ENCODE measurements at regions of chr16 and their contacts with region 1.

Region 1: GRCh38 chr16:30585400-30586189 is at the start of gene ZNF785:
- DNase-seq: peak; percentile 96 to 97
- ATAC-seq: peak; percentile 99 to 100 (median 100)
- H3K4me3 ChIP-seq: peak within 1 kb of the TSS; percentile 81
- H3K27ac ChIP-seq: peak within 1 kb of the TSS; percentile 87
- H3K4me1 ChIP-seq: peaks cover 11% of the 10 kb centered on the region
- H3K27me3 ChIP-seq: no peaks in the 10 kb centered on the region
- CTCF ChIP-seq: peak; percentile 10
- total RNA-seq, gene ZNF785: 3.4 to 5.4 (median 3.9) TPM

Region 2: DNA sequence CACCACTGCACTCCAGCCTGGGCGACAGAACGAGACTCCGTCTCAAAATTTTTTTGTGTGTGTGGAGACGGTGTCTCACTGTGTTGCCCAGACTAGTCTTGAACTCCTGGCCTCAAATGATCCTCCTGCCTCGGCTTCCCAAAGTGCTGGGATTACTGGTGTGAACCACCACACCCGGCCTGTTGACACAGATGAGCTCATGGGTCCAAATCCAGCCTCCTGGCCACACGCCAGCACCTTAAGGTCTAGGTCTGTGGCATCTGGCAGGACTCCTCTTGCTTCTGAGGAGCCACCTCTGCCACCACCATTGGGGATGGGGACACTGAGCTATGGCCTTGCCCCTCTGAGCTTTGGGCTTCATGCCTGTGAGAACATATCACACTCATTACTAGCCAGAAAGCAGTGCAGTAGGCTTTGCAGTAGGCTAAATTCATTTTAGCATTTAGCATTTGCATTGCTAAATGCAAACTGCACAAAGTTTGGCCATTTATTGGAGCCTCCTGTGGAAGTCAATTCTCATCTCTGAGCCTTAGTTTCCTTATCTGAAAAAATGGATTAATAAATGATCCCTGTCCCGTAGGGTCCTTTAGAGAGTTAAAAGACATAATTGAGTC is 717.1 kb before region 1 on chr16:
- intact Hi-C with region 1: no loop called
- DNase-seq: peak in 1 of 2 donors; percentile 23
- ATAC-seq: no peak
- H3K4me3 ChIP-seq: no peak overlapping the region
- H3K27ac ChIP-seq: no peak overlapping the region
- H3K4me1 ChIP-seq: no peaks in the 10 kb centered on the region
- H3K27me3 ChIP-seq: no peaks in the 10 kb centered on the region
- CTCF ChIP-seq: no peak

Region 3: DNA sequence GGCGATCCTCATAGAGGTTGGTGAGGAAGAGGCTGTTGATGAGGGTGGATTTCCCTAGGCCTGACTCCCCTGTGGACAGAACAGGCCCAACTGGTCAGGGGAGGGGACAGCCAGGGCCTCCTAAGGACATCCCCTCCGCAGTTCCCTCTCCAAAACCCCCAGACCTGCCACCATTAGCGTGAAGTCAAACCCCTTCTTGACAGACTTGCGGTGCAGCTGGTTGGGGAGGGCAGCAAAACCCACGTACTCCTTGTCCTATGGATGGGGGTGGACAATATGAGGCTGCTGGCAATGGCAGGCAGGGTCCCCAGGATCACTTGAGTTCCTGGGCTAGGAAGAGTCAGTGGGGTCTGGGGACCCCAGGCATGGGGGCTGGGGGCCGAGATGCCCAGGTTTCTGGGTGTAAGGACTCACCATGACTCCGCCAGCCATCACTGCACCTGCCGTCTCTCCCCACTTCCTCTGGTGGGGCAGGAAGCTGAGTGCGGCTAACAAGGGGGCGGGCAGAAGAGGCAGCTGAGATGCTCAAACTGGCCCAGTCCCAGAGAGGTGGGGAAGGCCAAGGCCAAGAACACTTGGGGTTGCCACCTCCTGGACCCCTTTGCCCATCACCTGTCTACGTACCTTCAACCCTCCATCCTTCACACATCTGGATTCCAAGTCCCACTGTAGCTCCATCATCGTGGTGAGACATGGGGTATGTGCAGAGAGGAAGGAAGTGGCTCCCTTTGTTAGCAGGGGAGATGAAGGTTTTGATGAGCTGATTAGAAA is 203.3 kb before region 1 on chr16 and contains the start of gene SEPTIN1:
- intact Hi-C with region 1: no loop called
- DNase-seq: no peak
- ATAC-seq: no peak
- H3K4me3 ChIP-seq: no peak within 1 kb of the TSS
- H3K27ac ChIP-seq: peak within 1 kb of the TSS; percentile 32
- H3K4me1 ChIP-seq: peaks cover 12% of the 10 kb centered on the region
- H3K27me3 ChIP-seq: no peaks in the 10 kb centered on the region
- CTCF ChIP-seq: no peak
- total RNA-seq, gene SEPTIN1: 0.34 to 1.8 (median 0.90) TPM

Region 4: DNA sequence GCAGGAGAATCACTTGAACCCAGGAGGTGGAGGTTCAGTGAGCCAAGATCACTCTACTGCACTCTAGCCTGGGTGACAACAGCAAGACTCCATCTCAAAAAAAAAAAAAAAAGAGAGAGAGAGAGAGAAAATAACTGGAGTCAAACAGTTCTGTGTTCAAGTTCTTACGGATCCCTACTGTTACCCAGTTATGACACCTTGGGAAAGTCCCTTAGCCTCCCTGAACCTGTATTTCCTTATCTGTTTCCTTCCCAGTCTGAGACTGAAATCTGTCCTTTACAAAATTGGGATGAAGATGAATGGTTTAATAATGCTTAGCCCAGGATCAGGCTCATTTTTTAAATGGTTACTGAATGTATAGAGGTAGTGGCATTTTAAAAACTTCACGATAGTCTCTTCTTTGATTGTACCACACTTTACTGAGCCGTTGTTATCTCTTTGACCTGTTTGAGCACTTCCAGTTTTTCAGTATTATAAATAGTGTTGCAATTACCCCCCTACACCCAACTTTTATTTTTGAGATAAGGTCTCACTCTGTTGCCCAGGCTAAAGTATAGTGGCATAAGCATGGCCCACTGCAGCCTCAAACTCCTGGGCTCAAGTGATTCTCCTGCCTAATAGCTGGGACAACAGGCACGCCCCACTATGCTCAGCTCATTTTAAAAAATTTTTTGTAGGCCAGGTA is 76.4 kb before region 1 on chr16:
- intact Hi-C with region 1: no loop called
- DNase-seq: no peak
- ATAC-seq: no peak
- H3K4me3 ChIP-seq: no peak overlapping the region
- H3K27ac ChIP-seq: no peak overlapping the region
- H3K4me1 ChIP-seq: no peaks in the 10 kb centered on the region
- H3K27me3 ChIP-seq: peaks cover 0 to 2% (median 0%) of the 10 kb centered on the region in 3 donors
- CTCF ChIP-seq: no peak

Region 5: GRCh38 chr16:30534368-30535105 is 51.1 kb before region 1 on chr16 and contains the start of gene ZNF747:
- intact Hi-C with region 1: loop called in 1 of 2 experiments (anchors 2 kb)
- DNase-seq: peak; percentile 95 to 97
- ATAC-seq: peak; percentile 91 to 94 (median 92)
- H3K4me3 ChIP-seq: peak within 1 kb of the TSS; percentile 94
- H3K27ac ChIP-seq: peak within 1 kb of the TSS; percentile 97
- H3K4me1 ChIP-seq: peaks cover 17% of the 10 kb centered on the region
- H3K27me3 ChIP-seq: no peaks in the 10 kb centered on the region
- CTCF ChIP-seq: peak; percentile 0
- total RNA-seq, gene ZNF747: 6.4 to 16.4 (median 8.9) TPM

Region 6: DNA sequence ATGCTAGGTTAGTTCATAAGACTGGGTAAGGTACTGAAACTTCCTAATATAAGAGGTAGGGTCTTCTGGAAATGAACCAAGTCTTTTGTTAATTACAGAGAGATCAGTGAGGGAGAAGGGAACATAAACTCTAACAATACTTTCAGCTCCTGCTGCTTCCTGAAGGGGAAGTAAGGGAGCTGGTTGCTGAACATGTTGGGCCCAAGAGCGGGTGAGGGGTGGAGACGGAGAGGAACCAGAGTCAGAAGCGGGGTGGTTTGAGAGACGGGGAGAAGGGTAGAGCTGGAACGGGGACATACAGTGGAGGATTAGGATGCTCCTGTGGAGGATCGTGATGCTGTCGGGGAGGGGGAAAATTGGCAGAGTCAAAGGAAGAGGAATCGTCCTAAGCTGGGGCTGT is 39.5 kb before region 1 on chr16:
- intact Hi-C with region 1: no loop called
- DNase-seq: no peak
- ATAC-seq: no peak
- H3K4me3 ChIP-seq: no peak overlapping the region
- H3K27ac ChIP-seq: no peak overlapping the region
- H3K4me1 ChIP-seq: peaks cover 5% of the 10 kb centered on the region
- H3K27me3 ChIP-seq: no peaks in the 10 kb centered on the region
- CTCF ChIP-seq: no peak

Region 7: GRCh38 chr16:30557957-30558788 is 27.4 kb before region 1 on chr16 and contains the start of gene ZNF764:
- intact Hi-C with region 1: loop called in 1 of 2 experiments (anchors 1 kb)
- DNase-seq: peak; percentile 98 to 99
- ATAC-seq: peak; percentile 95 to 96 (median 96)
- H3K4me3 ChIP-seq: peak within 1 kb of the TSS; percentile 96
- H3K27ac ChIP-seq: peak within 1 kb of the TSS; percentile 97
- H3K4me1 ChIP-seq: peaks cover 30% of the 10 kb centered on the region
- H3K27me3 ChIP-seq: no peaks in the 10 kb centered on the region
- CTCF ChIP-seq: no peak
- total RNA-seq, gene ZNF764: 2.7 to 8.7 (median 5.2) TPM

Measured in psoas muscle (tissue), 8 donors.